Activated T-helper 1 cell treated with anti-CD3 and anti-CD28 coated beads, Interleukin-12 subunit alpha, Interleukin-12 subunit beta, Interleukin-2, Interleukin-4 antibody, amounts not matched to agents 30 ng/mL and 10 ng/mL and 1 ng/mL, durations not matched to agents 14 hours and 24 hours and 36 hours (primary cell): ENCODE measurements at regions of chr3 and their contacts with region 1.

Region 1: DNA sequence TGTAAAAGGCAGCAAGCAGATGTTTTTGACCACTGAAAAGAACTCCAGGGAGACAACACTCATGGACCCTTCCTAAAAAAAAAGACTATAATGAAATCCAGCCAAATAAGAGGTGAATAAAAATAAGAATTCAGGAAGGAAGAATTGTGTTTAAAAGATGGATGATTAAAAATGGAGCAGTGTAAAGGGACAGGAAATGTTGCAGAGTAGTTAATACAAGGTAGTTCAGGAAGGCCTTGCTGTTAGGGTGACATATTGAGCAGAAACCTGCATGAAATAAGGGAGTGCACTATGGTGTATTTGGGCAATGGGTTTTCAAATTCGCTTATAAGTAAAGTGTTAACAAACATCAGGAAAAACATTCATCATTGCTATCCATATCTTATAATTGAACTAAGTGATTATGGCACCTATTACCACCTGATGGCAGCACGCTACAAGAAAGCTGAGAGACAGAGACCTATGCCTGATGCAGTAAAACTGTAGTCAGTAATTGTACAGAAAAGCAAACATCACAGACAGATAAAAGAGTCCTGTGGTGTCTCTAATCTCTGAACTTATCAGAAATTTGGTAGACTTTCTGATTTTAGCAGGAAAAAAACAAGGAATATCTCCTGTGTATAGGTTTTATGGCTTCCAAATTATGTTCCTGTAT is 5.8 kb upstream of the DBR1 start:
- DNase-seq: no peak
- H3K4me3 Mint-ChIP-seq: no peak overlapping the region
- H3K27ac Mint-ChIP-seq: no peak overlapping the region
- H3K4me1 Mint-ChIP-seq: peaks cover 5% of the 10 kb centered on the region
- H3K27me3 Mint-ChIP-seq: peaks cover 12% of the 10 kb centered on the region

Region 2: GRCh38 chr3:138347960-138348753 is 167.7 kb after region 1 on chr3 and contains the start of gene MRAS:
- intact Hi-C with region 1: loop called (anchors 2 kb)
- DNase-seq: no peak
- H3K4me3 Mint-ChIP-seq: peak within 1 kb of the TSS; percentile 93
- H3K27ac Mint-ChIP-seq: peak within 1 kb of the TSS; percentile 69
- H3K4me1 Mint-ChIP-seq: peaks cover 12% of the 10 kb centered on the region
- H3K27me3 Mint-ChIP-seq: peaks cover 36% of the 10 kb centered on the region
- total RNA-seq, gene MRAS: 0.05 and 0.42 TPM in 2 replicates